ENCODE measurements at regions of chr1 and their contacts with region 1.

Region 1: DNA sequence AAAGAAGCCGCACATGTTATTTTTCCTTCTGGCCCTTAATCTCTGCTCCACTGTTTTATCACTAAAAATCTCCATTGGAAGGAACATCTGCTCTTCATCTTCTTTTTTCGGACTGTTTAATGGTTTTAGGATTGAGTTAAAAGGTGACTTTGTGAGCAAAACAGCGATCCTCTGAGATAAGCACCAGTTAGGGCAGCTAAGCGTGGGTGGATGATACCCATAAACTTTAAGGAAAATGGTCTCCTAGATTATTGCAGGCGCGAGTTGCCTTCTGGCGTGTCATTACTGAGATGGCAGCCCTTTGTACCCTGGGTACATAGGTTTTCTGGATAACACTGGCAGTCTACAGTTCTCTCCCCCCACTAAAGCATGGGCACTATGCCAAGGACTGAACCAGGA is 44.0 kb upstream of the HMGB4 start:
- DNase-seq: no peak
- ATAC-seq: no peak
- H3K4me3 ChIP-seq: no peak overlapping the region
- H3K27ac ChIP-seq: no peak overlapping the region
- H3K4me1 ChIP-seq: no peaks in the 10 kb centered on the region
- H3K27me3 ChIP-seq: peaks cover 5% of the 10 kb centered on the region; the same call in 1 of the 2 replicates
- CTCF ChIP-seq: no peak

Region 2: DNA sequence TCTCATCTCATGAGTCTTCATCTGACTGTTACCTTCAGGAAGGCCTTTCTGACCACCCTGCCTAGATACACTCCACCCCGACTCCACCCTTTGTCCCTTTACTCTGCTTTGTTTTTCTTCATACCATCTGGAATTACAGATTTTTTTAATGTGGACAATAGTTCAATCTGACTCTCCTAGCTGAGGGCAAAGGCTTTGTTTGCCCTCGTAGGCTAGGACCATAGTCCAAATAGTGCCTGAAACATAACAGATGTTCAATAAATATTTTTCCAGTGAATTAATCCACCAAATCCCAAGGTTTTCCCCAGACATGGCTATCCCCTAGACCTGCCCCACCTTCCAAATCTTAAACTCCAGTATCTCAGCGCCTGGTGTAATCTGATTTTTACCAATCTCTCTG is 758.4 kb after region 1 on chr1:
- CTCF ChIA-PET with region 1: no interaction called
- POLR2A ChIA-PET with region 1: no interaction called
- intact Hi-C with region 1: loop called (anchors 10 kb)
- DNase-seq: no peak
- ATAC-seq: no peak
- H3K4me3 ChIP-seq: no peak overlapping the region
- H3K27ac ChIP-seq: no peak overlapping the region
- H3K4me1 ChIP-seq: no peaks in the 10 kb centered on the region
- H3K27me3 ChIP-seq: no peaks in the 10 kb centered on the region
- CTCF ChIP-seq: no peak